ENCODE measurements at regions of chr19 and their contacts with region 1.

Region 1: GRCh38 chr19:38374429-38375176 is at the start of gene PSMD8:
- DNase-seq: peak; percentile 97 to 99
- ATAC-seq: peak; percentile 95 to 99 (median 96)
- H3K4me3 ChIP-seq: peak within 1 kb of the TSS; percentile 68
- H3K4me3 Mint-ChIP-seq: peak within 1 kb of the TSS; percentile 100
- H3K27ac ChIP-seq: peak within 1 kb of the TSS; percentile 91
- H3K27ac Mint-ChIP-seq: peak within 1 kb of the TSS; percentile 99 to 100
- H3K4me1 ChIP-seq: peaks cover 26% of the 10 kb centered on the region
- H3K4me1 Mint-ChIP-seq: peaks cover 25 to 33% of the 10 kb centered on the region in 2 donors
- H3K27me3 ChIP-seq: no peaks in the 10 kb centered on the region
- H3K27me3 Mint-ChIP-seq: peaks cover 0 to 4% of the 10 kb centered on the region in 2 donors
- CTCF ChIP-seq: no peak
- total RNA-seq, gene PSMD8: 109 to 115 (median 109) TPM

Region 2: GRCh38 chr19:38315657-38316476 is 58.7 kb before region 1 on chr19 and contains the start of gene YIF1B:
- intact Hi-C with region 1: loop called (anchors 1 kb)
- DNase-seq: peak; percentile 95 to 97
- ATAC-seq: peak; percentile 89 to 96 (median 91)
- H3K4me3 ChIP-seq: peak within 1 kb of the TSS; percentile 82
- H3K4me3 Mint-ChIP-seq: peak within 1 kb of the TSS; percentile 89
- H3K27ac ChIP-seq: peak within 1 kb of the TSS; percentile 94
- H3K27ac Mint-ChIP-seq: peak within 1 kb of the TSS; percentile 76 to 82
- H3K4me1 ChIP-seq: peaks cover 51% of the 10 kb centered on the region
- H3K4me1 Mint-ChIP-seq: peaks cover 15 to 29% of the 10 kb centered on the region in 2 donors
- H3K27me3 ChIP-seq: no peaks in the 10 kb centered on the region
- H3K27me3 Mint-ChIP-seq: peaks cover 0 to 15% of the 10 kb centered on the region in 2 donors
- CTCF ChIP-seq: no peak
- total RNA-seq, gene YIF1B: 23.2 to 28.4 (median 24.1) TPM

Region 3: DNA sequence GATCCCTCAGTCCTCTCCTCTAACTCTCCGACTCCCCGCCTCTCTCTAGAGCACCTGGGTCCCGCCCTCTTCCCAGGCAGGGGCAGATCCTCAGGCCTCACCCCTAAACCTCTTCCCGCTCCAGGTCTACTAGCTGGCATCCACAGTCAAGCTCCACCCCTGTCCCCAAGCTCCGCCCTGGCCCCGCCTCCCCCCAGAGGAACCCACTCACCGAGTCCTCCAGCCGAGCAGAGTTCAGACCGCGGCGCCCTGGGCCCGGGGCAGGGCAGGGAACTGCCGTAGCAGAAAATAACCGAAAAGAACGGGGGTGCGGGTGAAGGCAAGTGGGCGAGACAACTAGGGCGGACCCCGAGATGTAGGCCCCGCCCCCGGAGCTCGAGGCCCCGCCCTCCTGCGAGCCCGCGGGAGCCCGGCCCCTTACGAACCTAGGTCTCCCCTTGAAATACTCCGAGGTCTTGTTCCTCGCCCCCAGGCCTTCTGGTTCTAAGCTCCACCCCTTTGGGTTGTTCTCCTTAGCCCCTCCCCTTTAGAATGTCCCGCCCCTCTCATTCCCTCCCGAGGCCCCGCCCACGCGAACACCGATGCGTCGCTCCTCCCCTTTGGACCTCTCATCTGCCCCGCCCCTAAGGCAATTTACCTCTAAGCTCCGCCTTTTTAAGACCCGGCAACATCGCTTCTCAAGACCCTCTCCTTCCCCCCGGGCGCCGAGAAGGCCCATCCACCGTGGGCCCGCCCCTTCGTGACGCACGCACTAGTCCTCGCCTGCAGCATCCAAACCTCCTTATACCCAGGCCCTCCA is 13.1 kb after region 1 on chr19 and contains the start of gene GGN:
- intact Hi-C with region 1: loop called (anchors 2 kb)
- DNase-seq: peak; percentile 74 to 88
- ATAC-seq: peak; percentile 76 to 82 (median 78)
- H3K4me3 ChIP-seq: peak within 1 kb of the TSS; percentile 30
- H3K4me3 Mint-ChIP-seq: peak within 1 kb of the TSS; percentile 94
- H3K27ac ChIP-seq: no peak within 1 kb of the TSS
- H3K27ac Mint-ChIP-seq: peak within 1 kb of the TSS; percentile 72 to 90
- H3K4me1 ChIP-seq: peaks cover 35% of the 10 kb centered on the region
- H3K4me1 Mint-ChIP-seq: peaks cover 12 to 19% of the 10 kb centered on the region in 2 donors
- H3K27me3 ChIP-seq: peaks cover 16% of the 10 kb centered on the region
- H3K27me3 Mint-ChIP-seq: peaks cover 13 to 20% of the 10 kb centered on the region in 2 donors
- CTCF ChIP-seq: no peak
- total RNA-seq, gene GGN: not detected

Region 4: GRCh38 chr19:38402967-38403861 is 28.6 kb after region 1 on chr19 and contains the start of gene FAM98C:
- intact Hi-C with region 1: loop called (anchors 2 kb)
- DNase-seq: peak; percentile 99
- ATAC-seq: peak; percentile 95 to 99 (median 96)
- H3K4me3 ChIP-seq: peak within 1 kb of the TSS; percentile 93
- H3K4me3 Mint-ChIP-seq: peak within 1 kb of the TSS; percentile 97
- H3K27ac ChIP-seq: peak within 1 kb of the TSS; percentile 84
- H3K27ac Mint-ChIP-seq: peak within 1 kb of the TSS; percentile 86 to 95
- H3K4me1 ChIP-seq: peaks cover 16% of the 10 kb centered on the region
- H3K4me1 Mint-ChIP-seq: peaks cover 10 to 19% of the 10 kb centered on the region in 2 donors
- H3K27me3 ChIP-seq: peaks cover 3% of the 10 kb centered on the region
- H3K27me3 Mint-ChIP-seq: peaks cover 12 to 16% of the 10 kb centered on the region in 2 donors
- CTCF ChIP-seq: peak; percentile 100
- total RNA-seq, gene FAM98C: 36.9 to 42.1 (median 41.6) TPM

Measured in natural killer cell (primary cell).